SK-N-SH (cell line): ENCODE measurements at regions of chr2 and their contacts with region 1.

Region 1: DNA sequence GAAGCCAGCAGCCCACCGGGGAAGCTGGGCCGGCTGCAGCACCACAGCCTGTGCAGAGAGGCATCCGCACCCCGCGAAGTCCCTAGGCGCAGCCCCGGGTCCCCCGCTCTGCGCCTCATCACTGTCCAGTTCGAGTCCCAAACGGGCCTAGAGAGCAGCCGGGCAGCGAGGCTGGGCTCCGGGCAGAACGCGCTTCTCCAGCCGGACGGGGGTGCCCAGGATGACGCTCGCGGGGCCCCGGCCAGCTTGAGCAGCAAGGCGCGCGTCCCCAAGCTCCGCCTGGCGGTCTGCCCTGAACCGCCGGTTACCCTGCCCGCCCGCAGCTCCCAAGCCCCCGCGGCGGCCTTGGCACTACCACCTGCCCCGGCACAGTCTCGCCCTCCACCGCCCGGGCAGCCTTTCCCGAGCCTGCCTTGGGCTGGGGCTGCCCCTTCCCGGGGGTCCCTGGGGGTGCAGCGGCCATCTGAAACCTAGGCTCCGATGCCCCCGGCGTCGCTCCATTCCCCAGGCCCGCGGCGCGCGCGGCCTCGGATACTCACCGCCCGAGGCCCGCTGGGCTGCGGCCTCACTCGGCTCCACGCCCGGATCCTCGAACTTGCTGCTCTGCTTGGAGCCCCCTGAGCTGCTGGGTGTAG is 591 bp downstream of the SLC16A14 start:
- DNase-seq: peak; percentile 82
- H3K4me3 ChIP-seq: peak overlapping the region; percentile 56 to 66
- H3K27ac ChIP-seq: no peak overlapping the region; a peak in 1 of 4 replicates
- H3K4me1 ChIP-seq: no peaks in the 10 kb centered on the region; a peak in 1 of 4 replicates
- H3K27me3 ChIP-seq: no peaks in the 10 kb centered on the region
- CTCF ChIP-seq: peak; percentile 21
- EP300 ChIP-seq: no peak
- RAD21 ChIP-seq: no peak

Region 2: DNA sequence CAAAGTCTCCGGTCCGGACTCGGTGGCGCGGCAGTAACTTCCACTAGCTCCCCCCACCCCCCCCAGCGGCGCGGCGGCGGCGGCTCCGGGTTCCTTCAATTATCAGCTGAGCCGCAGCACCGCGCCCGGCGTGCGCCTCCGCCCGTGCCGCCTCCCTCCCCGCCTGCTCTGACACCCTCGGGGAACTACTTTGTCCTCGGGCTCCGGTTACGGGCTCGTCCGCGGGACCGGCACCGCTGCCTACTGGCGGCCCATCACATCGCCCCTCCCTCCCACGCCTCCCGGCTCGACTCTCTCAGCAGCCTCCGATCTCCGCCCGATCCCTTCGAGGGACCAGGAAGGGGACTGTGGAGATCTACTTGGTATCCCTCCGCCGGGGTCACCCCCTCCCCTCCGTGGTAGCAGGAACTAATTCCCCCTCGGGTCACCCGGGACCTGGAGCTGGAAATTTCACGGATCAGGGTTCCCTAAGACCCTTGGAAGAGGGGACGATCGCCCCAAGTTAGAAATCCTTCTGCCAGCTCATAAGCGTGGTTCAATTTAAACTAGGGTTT is 146.2 kb before region 1 on chr2 and contains the start of gene TRIP12:
- CTCF ChIA-PET with region 1: interaction called, 11 read pairs
- POLR2A ChIA-PET with region 1: interaction called, 11 read pairs
- DNase-seq: peak; percentile 95
- H3K4me3 ChIP-seq: peak within 1 kb of the TSS; percentile 96 to 98
- H3K27ac ChIP-seq: peak within 1 kb of the TSS; percentile 97 to 99
- H3K4me1 ChIP-seq: peaks cover 7 to 9% of the 10 kb centered on the region in 2 experiments; a peak in 3 of 4 replicates
- H3K27me3 ChIP-seq: no peaks in the 10 kb centered on the region
- CTCF ChIP-seq: no peak
- EP300 ChIP-seq: 0 out of 4 replicates have a peak, but pooled peaks of 1 of the 2 experiments have one; percentile 12
- RAD21 ChIP-seq: no peak
- polyA plus RNA-seq, gene TRIP12: 30.3 and 47.5 TPM in 2 replicates

Region 3: DNA sequence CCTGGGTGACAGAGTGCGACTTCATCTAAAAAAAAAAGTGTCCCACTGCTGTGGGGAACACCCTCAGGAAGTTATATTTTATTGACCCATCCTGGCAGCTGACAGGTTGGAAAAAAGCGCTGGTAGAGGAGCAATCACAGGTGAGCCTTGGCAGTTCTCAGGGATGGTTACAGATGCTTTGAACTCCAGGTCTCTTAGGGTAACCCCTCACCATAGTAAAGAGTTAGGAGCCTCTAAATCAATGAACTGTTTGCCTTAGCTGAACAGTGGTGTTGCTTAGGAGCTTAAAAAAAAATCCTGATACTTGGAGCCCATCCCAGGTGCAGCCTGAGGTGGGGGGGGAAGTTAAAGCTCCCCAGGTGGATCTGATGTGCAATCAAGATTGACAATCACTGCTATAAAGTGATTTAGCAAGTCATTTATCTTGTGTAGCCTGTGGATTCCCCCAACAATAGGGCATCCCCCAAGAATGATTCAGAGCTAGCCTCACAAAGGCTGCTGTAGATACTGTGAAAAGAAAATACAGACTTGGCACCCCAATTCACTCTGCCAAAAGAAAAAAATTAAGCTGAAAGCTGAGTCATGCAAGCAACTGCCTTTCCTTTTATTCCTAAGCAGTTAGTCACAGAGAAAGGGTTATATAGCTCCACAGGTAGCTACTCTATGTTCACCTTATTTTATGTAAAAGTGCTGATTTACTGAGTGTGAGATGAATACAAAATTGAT is 14.2 kb before region 1 on chr2:
- CTCF ChIA-PET with region 1: interaction called, 69 read pairs
- POLR2A ChIA-PET with region 1: no interaction called
- DNase-seq: no peak
- H3K4me3 ChIP-seq: no peak overlapping the region
- H3K27ac ChIP-seq: peak overlapping the region in 1 of 2 experiments; percentile 15; a peak in 1 of 4 replicates
- H3K4me1 ChIP-seq: no peaks in the 10 kb centered on the region; a peak in 1 of 4 replicates
- H3K27me3 ChIP-seq: no peaks in the 10 kb centered on the region
- CTCF ChIP-seq: no peak
- EP300 ChIP-seq: no peak
- RAD21 ChIP-seq: no peak